Heart left ventricle (tissue), 16 donors: ENCODE measurements at regions of chr19 and their contacts with region 1.

Region 1: DNA sequence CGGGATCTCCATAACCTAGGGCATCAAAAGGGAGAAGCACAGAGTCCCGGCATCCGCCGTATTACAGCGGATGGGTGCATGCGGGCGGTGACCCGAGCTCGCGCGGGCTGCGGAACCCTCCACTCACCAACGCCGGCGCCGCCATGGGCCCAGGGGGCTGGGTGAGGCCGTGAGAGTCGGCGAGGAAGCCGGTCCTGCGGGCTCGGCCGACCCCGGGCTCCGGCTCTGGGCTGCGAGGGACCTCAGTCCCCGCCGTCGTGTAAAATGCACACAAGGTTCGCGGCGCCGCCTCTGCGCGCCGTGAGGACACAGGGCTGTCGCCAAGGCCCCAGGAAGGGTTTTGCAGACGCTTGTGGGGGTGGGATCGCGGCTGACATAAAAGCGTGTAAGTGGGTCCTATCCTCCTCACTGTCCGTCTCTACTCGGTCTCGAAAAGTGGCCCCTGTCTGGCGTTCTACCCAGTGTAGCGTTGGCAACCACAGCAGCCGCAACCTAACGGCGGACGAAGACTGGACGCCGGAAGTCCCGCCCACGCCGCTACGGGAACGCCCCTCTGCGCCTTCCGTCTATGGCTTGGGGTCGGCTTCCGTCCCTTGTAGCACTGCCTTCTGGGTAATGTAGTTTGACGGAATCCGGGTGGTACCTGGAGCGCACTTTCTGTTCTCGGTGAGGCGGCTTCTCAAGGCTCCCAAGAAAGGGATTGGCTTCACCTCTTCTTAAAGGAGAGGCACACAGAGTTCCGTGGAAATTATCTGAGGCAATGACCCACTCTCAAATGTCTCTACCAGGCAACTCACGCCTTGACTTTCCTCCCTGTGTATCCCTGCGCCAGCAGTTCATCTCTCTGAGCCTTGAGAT is at the start of gene ZNF599:
- DNase-seq: peak; percentile 92 to 95 (median 94)
- ATAC-seq: peak; percentile 98 to 100 (median 100)
- H3K4me3 ChIP-seq: peak within 1 kb of the TSS; percentile 50 to 95 (median 79)
- H3K27ac ChIP-seq: peak within 1 kb of the TSS; percentile 28 to 89 (median 80)
- H3K4me1 ChIP-seq: peaks cover 0 to 14% (median 9%) of the 10 kb centered on the region in 12 donors
- H3K27me3 ChIP-seq: no peaks in the 10 kb centered on the region
- CTCF ChIP-seq: no peak
- POLR2A ChIP-seq: peak in 1 of 2 donors; percentile 77
- total RNA-seq, gene ZNF599: 3.0 to 5.6 (median 3.6) TPM

Region 2: DNA sequence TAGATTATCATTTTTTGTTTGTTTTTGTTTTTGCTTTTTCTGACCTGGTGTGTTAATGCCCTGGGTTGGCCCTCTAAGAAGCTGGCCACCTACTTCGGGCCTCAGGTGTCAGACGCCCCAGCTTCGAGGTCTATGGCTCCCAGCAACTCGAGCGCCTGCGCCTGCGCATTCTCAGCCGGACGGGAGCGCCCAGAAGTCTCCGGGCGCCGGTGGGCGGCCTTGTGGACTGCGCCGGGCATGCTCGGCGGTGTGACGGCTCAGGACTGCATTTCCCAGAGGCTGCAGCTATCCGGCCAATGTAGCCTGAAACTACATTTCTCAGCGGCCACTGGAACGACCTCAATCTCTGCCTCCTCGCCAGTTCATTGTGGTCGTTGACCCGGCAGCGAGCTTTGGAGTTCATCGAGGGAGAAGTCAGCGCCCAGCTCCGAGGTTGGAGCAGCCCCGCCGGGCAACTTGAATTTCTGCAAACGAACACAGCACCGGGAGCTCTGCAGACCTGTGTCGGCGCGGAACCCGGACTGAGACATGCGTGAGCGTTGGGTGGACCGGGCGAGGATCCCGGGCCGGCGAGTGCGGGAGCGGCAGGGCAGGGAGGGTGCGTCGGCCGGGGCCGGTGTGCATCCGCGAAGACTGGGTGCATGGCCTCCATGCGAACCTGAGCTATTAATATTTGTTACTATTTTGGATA is 153.9 kb after region 1 on chr19 and contains the start of gene ZNF30:
- intact Hi-C with region 1: loop called in 4 of 10 experiments (anchors 5 to 10 kb)
- DNase-seq: peak; percentile 92 to 96 (median 96)
- ATAC-seq: peak; percentile 98 to 100 (median 100)
- H3K4me3 ChIP-seq: peak within 1 kb of the TSS; percentile 41 to 86 (median 64)
- H3K27ac ChIP-seq: peak within 1 kb of the TSS in 11 of 12 donors; percentile 69 to 96 (median 78)
- H3K4me1 ChIP-seq: peaks cover 0 to 15% (median 8%) of the 10 kb centered on the region in 12 donors
- H3K27me3 ChIP-seq: no peaks in the 10 kb centered on the region
- CTCF ChIP-seq: peak in 2 of 12 donors; percentile 7 to 12
- POLR2A ChIP-seq: peak in 1 of 2 donors; percentile 69
- total RNA-seq, gene ZNF30: 0.95 to 13.4 (median 2.8) TPM